Activated T-helper 1 cell treated with anti-CD3 and anti-CD28 coated beads, Interleukin-12 subunit alpha, Interleukin-12 subunit beta, Interleukin-2, Interleukin-4 antibody, amounts not matched to agents 30 ng/mL and 10 ng/mL and 1 ng/mL, durations not matched to agents 14 hours and 24 hours and 36 hours (primary cell): ENCODE measurements at regions of chr2 and their contacts with region 1.

Region 1: GRCh38 chr2:230441227-230441897 is 25.4 kb downstream of the SP100 start:
- DNase-seq: peak; percentile 34
- H3K4me3 Mint-ChIP-seq: peak overlapping the region; percentile 31
- H3K27ac Mint-ChIP-seq: peak overlapping the region; percentile 90
- H3K4me1 Mint-ChIP-seq: peaks cover 65% of the 10 kb centered on the region
- H3K27me3 Mint-ChIP-seq: no peaks in the 10 kb centered on the region

Region 2: DNA sequence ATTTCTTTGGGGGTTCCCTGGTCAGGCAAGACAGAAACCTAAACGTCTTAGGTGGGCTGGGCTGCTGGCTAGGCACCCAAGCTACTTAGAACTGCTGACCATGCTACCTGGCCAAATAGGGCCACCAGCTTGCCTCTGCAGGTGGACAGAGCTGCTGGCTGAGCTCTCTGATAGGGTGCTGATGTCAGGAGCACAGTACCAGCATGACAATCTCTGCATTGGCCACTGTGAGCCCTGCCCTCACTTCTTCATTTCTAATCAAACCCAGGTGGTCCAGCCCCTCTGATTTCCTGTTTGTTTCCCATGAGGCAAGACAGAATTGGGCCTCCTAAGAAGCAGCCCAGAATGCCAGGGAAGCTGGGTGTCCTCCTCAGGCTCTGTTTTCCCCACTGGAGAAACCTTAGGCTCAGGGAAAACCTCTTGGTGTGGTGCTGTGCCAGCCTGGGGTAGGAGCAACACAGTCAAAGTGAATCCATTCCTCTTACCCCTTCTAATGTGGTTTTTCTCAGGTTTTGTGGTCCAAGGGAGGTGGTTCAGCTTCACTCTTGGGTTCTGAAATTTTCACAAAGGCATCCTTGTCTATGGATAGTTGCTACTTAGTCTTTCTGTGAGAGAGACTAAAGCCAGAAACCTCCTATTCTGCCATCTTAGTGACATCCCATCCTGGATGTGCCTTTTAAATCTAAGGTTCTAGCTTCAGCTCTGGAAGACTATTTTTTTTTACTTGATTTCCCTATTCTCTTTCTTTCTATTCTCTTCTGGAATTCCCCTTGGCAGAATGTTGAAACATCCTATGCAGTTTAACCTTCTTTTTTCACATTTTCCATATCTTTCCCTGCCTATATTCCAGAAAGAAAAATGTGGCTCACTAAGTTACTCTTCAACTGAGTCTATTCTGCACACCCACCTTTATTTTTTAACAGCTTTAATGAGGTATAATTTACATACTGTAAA is 10.1 kb before region 1 on chr2:
- intact Hi-C with region 1: loop called (anchors 1 kb)
- DNase-seq: no peak
- H3K4me3 Mint-ChIP-seq: peak overlapping the region; percentile 8
- H3K27ac Mint-ChIP-seq: peak overlapping the region; percentile 32
- H3K4me1 Mint-ChIP-seq: peaks cover 64% of the 10 kb centered on the region
- H3K27me3 Mint-ChIP-seq: no peaks in the 10 kb centered on the region